ENCODE measurements at regions of chr19 and their contacts with region 1.

Region 1: GRCh38 chr19:12092065-12092867 is 27.7 kb downstream of the ZNF844 start:
- DNase-seq: peak; percentile 90
- ATAC-seq: peak; percentile 92
- H3K4me3 Mint-ChIP-seq: peak overlapping the region; percentile 83
- H3K27ac Mint-ChIP-seq: peak overlapping the region; percentile 92
- H3K4me1 Mint-ChIP-seq: peaks cover 10% of the 10 kb centered on the region
- H3K27me3 Mint-ChIP-seq: peaks cover 6% of the 10 kb centered on the region
- CTCF ChIP-seq: no peak

Region 2: GRCh38 chr19:11949201-11949600 is 143.1 kb before region 1 on chr19:
- CTCF ChIA-PET with region 1: no interaction called
- POLR2A ChIA-PET with region 1: no interaction called
- intact Hi-C with region 1: no loop called
- DNase-seq: no peak
- ATAC-seq: no peak
- H3K4me3 Mint-ChIP-seq: no peak overlapping the region
- H3K27ac Mint-ChIP-seq: no peak overlapping the region
- H3K4me1 Mint-ChIP-seq: no peaks in the 10 kb centered on the region
- H3K27me3 Mint-ChIP-seq: no peaks in the 10 kb centered on the region
- CTCF ChIP-seq: no peak

Region 3: GRCh38 chr19:11964858-11965645 is 127.2 kb before region 1 on chr19 and contains the start of gene ZNF763:
- CTCF ChIA-PET with region 1: interaction called, 12 read pairs
- POLR2A ChIA-PET with region 1: no interaction called
- intact Hi-C with region 1: no loop called
- DNase-seq: peak; percentile 97
- ATAC-seq: peak; percentile 97
- H3K4me3 Mint-ChIP-seq: peak within 1 kb of the TSS; percentile 88
- H3K27ac Mint-ChIP-seq: peak within 1 kb of the TSS; percentile 92
- H3K4me1 Mint-ChIP-seq: peaks cover 24% of the 10 kb centered on the region
- H3K27me3 Mint-ChIP-seq: no peaks in the 10 kb centered on the region
- CTCF ChIP-seq: no peak
- total RNA-seq, gene ZNF763: 0.83 to 1.7 TPM

Region 4: DNA sequence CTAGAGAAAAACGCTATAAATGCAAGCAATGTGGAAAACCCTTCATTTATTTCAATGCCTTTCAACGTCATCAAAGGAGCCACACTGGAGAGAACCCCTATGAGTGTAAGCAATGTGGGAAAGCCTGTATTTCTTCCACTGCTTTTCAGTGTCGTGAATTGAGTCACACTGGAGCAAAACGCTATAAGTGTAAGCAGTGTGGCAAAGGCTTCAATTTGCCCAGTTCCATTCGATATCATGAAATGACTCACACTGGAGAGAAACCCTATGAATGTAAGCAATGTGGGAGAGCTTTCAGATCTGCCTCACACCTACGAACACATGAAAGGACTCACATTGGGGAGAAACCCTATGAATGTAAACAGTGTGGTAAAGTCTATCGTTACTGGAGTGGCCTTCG is 20.4 kb after region 1 on chr19:
- CTCF ChIA-PET with region 1: interaction called, 11 read pairs
- POLR2A ChIA-PET with region 1: interaction called, 8 read pairs
- intact Hi-C with region 1: no loop called
- DNase-seq: peak; percentile 49
- ATAC-seq: peak; percentile 92
- H3K4me3 Mint-ChIP-seq: no peak overlapping the region
- H3K27ac Mint-ChIP-seq: peak overlapping the region; percentile 30
- H3K4me1 Mint-ChIP-seq: peaks cover 29% of the 10 kb centered on the region
- H3K27me3 Mint-ChIP-seq: no peaks in the 10 kb centered on the region
- CTCF ChIP-seq: no peak

Region 5: DNA sequence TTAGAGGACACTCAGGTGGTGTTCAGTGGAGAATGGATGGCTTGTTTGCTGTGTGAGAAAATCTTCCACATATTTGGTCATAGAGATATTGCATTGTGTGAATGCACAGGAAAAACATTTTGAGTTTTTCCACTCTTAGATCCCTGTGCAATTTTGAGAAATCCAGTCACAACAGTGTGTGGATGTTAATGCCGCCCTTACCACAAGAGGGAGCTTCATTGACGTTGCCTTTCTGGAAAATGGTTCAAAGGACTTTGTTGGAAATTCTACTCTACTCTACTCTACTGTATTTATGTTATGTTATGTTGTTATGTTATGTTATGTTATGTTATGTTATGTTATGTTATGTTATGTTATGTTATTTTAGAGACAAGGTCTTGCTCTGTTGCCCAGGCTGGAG is 34.4 kb after region 1 on chr19:
- CTCF ChIA-PET with region 1: interaction called, 16 read pairs
- POLR2A ChIA-PET with region 1: interaction called, 4 read pairs
- intact Hi-C with region 1: no loop called
- DNase-seq: peak; percentile 31
- ATAC-seq: no peak
- H3K4me3 Mint-ChIP-seq: no peak overlapping the region
- H3K27ac Mint-ChIP-seq: no peak overlapping the region
- H3K4me1 Mint-ChIP-seq: peaks cover 4% of the 10 kb centered on the region
- H3K27me3 Mint-ChIP-seq: no peaks in the 10 kb centered on the region
- CTCF ChIP-seq: peak; percentile 49

Region 6: GRCh38 chr19:12156223-12157058 is 64.2 kb after region 1 on chr19 and contains the start of gene ZNF625:
- CTCF ChIA-PET with region 1: interaction called, 10 read pairs
- POLR2A ChIA-PET with region 1: interaction called, 11 read pairs
- intact Hi-C with region 1: no loop called
- DNase-seq: peak; percentile 72
- ATAC-seq: peak; percentile 89
- H3K4me3 Mint-ChIP-seq: peak within 1 kb of the TSS; percentile 89
- H3K27ac Mint-ChIP-seq: peak within 1 kb of the TSS; percentile 80
- H3K4me1 Mint-ChIP-seq: peaks cover 15% of the 10 kb centered on the region
- H3K27me3 Mint-ChIP-seq: peaks cover 3% of the 10 kb centered on the region
- CTCF ChIP-seq: no peak
- total RNA-seq, gene ZNF625: 3.9 to 4.6 TPM